ENCODE measurements at regions of chr1 and their contacts with region 1.

Region 1: GRCh38 chr1:228734881-228735801 is at the start of gene RHOU:
- DNase-seq: peak; percentile 7
- H3K4me3 ChIP-seq: peak within 1 kb of the TSS in 2 of 3 experiments; percentile 52 to 53
- H3K27ac ChIP-seq: no peak within 1 kb of the TSS
- H3K4me1 ChIP-seq: peaks cover 8% of the 10 kb centered on the region
- H3K27me3 ChIP-seq: peaks cover 28% of the 10 kb centered on the region
- CTCF ChIP-seq: peak in 1 of 2 donors; percentile 19
- total RNA-seq, gene RHOU: 0.14 to 0.67 TPM

Region 2: DNA sequence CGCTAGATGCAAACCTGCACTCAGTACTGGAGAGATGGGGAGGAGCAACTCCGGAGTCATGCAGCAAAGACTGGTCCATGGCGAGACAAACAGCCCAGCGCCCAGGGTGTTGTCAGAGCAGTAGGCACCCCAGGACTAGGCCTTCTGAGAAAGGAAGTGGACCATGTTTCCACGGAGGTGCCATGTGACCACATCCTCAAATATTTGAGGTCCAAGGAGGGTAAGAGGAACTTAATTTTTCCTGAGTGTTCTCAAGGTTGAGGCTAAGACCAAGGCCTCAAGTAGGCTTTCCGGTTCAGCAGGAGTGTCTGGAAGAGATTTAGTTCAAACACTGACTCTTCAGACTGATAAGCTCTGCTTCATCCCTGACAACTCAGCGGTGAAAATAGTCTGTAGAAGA is 186.3 kb after region 1 on chr1:
- CTCF ChIA-PET with region 1: no interaction called
- dilution Hi-C with region 1: no loop called
- in situ Hi-C with region 1: no loop called
- intact Hi-C with region 1: no loop called
- DNase-seq: no peak
- H3K4me3 ChIP-seq: no peak overlapping the region
- H3K27ac ChIP-seq: no peak overlapping the region
- H3K4me1 ChIP-seq: no peaks in the 10 kb centered on the region
- H3K27me3 ChIP-seq: no peaks in the 10 kb centered on the region
- CTCF ChIP-seq: no peak

Region 3: DNA sequence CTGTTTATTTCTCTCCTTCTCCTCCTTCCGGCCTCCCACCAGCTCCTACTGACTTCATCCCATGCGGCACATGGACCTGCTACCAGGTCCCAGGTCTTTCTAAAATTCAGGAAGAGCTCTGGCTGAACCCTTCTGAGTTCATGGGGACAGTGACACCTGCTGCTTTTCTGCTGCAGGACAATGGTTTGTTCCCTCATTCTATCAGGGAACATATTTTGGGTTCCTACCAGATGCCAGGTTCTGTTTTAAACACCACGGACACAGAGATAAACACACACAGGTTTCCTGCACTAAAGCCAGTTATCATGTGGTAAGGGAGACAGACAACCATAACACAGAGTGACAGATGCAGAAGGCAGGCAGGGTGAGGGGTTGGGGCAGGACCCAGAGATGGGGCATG is 421.7 kb after region 1 on chr1:
- CTCF ChIA-PET with region 1: no interaction called
- dilution Hi-C with region 1: no loop called
- in situ Hi-C with region 1: no loop called
- intact Hi-C with region 1: loop called (anchors 1 kb)
- DNase-seq: no peak
- H3K4me3 ChIP-seq: no peak overlapping the region
- H3K27ac ChIP-seq: no peak overlapping the region
- H3K4me1 ChIP-seq: no peaks in the 10 kb centered on the region
- H3K27me3 ChIP-seq: no peaks in the 10 kb centered on the region
- CTCF ChIP-seq: peak; percentile 11 to 55

Measured in mammary epithelial cell (primary cell).